Activated CD8-positive, alpha-beta T cell treated with anti-CD3 and anti-CD28 coated beads for 36 hours (primary cell): ENCODE measurements at regions of chr5 and their contacts with region 1.

Region 1: GRCh38 chr5:117454716-117455596 is 880.3 kb upstream of the SEMA6A start:
- DNase-seq: peak; percentile 60
- ATAC-seq: peak; percentile 85
- H3K4me3 Mint-ChIP-seq: peak overlapping the region; percentile 55
- H3K27ac Mint-ChIP-seq: no peak overlapping the region
- H3K4me1 Mint-ChIP-seq: no peaks in the 10 kb centered on the region
- H3K27me3 Mint-ChIP-seq: no peaks in the 10 kb centered on the region
- CTCF ChIP-seq: peak; percentile 85

Region 2: DNA sequence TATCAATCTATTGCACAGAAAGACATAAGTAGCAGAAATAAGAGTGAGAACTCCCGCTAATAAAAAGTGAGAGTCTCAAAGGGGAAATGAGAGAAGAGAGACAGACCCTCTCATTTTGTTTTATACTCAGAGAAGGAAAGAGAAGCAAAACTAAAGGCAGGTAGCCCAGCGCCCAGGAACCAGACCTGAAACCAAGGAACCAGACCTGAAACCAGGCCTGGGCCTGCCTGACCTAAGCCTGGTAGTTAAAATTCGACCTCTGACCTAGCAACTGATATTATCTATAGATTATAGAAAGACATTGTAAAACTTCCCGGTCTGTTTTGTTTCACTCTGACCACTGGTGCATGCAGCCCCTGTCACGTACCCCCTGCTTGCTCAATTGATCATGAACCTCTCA is 745.9 kb before region 1 on chr5:
- CTCF ChIA-PET with region 1: no interaction called
- POLR2A ChIA-PET with region 1: no interaction called
- intact Hi-C with region 1: no loop called
- DNase-seq: no peak
- ATAC-seq: no peak
- H3K4me3 Mint-ChIP-seq: no peak overlapping the region
- H3K27ac Mint-ChIP-seq: no peak overlapping the region
- H3K4me1 Mint-ChIP-seq: no peaks in the 10 kb centered on the region
- H3K27me3 Mint-ChIP-seq: no peaks in the 10 kb centered on the region
- CTCF ChIP-seq: no peak

Region 3: DNA sequence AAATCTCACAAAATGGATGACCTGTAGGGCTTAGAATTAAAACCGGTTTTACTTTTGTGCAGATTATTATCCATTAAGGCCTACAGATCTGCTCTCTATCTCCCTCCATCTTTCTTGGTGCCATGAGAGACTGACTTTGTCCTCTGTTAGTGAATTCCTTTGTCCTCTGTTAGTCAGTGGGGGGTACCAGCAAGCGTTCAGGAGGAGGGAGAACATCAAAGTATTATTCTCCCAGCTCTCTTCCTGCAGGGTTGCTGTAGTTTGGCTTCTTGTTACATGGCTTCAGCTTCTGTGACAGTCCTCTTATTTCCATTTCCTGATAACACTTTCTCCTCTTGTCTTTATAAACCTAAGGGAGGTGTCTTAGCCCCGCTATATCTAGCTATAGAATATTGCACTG is 29.8 kb before region 1 on chr5:
- CTCF ChIA-PET with region 1: interaction called, 11 read pairs
- POLR2A ChIA-PET with region 1: no interaction called
- intact Hi-C with region 1: no loop called
- DNase-seq: no peak
- ATAC-seq: no peak
- H3K4me3 Mint-ChIP-seq: no peak overlapping the region
- H3K27ac Mint-ChIP-seq: no peak overlapping the region
- H3K4me1 Mint-ChIP-seq: no peaks in the 10 kb centered on the region
- H3K27me3 Mint-ChIP-seq: no peaks in the 10 kb centered on the region
- CTCF ChIP-seq: no peak

Region 4: DNA sequence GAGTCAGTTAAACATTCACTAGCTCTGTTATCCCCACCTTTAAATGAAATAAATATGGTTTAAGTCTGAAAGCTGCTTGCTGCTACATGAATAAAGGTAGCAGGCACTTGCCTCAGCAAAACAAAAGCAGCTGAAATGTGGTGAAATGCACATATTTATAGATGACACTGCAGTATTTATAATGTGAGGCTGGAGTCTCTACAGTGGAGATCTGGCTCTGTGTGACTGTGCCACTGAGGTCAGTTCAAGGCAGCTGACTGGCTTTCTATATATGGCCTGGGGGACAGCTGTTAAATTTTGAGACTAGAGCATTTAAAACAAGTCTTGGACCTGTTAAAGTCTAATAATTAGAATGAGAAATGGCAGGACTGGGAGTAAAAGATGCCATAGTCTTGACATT is 20.7 kb before region 1 on chr5:
- CTCF ChIA-PET with region 1: interaction called, 16 read pairs
- POLR2A ChIA-PET with region 1: no interaction called
- intact Hi-C with region 1: no loop called
- DNase-seq: no peak
- ATAC-seq: no peak
- H3K4me3 Mint-ChIP-seq: no peak overlapping the region
- H3K27ac Mint-ChIP-seq: no peak overlapping the region
- H3K4me1 Mint-ChIP-seq: no peaks in the 10 kb centered on the region
- H3K27me3 Mint-ChIP-seq: no peaks in the 10 kb centered on the region
- CTCF ChIP-seq: no peak

Region 5: DNA sequence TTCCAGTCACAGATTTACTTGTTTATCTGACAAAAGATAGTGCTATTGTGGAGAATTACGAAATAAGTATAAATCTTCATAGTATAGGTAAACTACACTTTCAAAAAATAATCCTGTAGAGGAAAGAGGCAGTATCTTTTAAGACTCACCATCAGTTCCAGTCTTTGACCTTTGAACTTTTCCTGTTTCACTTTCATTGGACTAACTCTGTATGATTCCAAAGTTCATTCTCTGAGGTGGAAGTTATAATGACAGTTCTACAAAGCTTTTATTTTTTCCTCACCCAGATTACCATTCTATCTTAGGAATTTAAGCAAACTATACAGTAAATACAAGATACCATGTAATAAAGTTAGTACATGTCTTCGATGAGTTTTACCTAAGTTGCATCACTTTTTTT is 21.0 kb after region 1 on chr5:
- CTCF ChIA-PET with region 1: interaction called, 17 read pairs
- POLR2A ChIA-PET with region 1: no interaction called
- intact Hi-C with region 1: no loop called
- DNase-seq: no peak
- ATAC-seq: no peak
- H3K4me3 Mint-ChIP-seq: no peak overlapping the region
- H3K27ac Mint-ChIP-seq: no peak overlapping the region
- H3K4me1 Mint-ChIP-seq: no peaks in the 10 kb centered on the region
- H3K27me3 Mint-ChIP-seq: no peaks in the 10 kb centered on the region
- CTCF ChIP-seq: no peak

Region 6: GRCh38 chr5:117604845-117605244 is 149.9 kb after region 1 on chr5:
- CTCF ChIA-PET with region 1: no interaction called
- POLR2A ChIA-PET with region 1: no interaction called
- intact Hi-C with region 1: no loop called
- DNase-seq: no peak
- ATAC-seq: no peak
- H3K4me3 Mint-ChIP-seq: no peak overlapping the region
- H3K27ac Mint-ChIP-seq: no peak overlapping the region
- H3K4me1 Mint-ChIP-seq: no peaks in the 10 kb centered on the region
- H3K27me3 Mint-ChIP-seq: no peaks in the 10 kb centered on the region
- CTCF ChIP-seq: no peak

Region 7: DNA sequence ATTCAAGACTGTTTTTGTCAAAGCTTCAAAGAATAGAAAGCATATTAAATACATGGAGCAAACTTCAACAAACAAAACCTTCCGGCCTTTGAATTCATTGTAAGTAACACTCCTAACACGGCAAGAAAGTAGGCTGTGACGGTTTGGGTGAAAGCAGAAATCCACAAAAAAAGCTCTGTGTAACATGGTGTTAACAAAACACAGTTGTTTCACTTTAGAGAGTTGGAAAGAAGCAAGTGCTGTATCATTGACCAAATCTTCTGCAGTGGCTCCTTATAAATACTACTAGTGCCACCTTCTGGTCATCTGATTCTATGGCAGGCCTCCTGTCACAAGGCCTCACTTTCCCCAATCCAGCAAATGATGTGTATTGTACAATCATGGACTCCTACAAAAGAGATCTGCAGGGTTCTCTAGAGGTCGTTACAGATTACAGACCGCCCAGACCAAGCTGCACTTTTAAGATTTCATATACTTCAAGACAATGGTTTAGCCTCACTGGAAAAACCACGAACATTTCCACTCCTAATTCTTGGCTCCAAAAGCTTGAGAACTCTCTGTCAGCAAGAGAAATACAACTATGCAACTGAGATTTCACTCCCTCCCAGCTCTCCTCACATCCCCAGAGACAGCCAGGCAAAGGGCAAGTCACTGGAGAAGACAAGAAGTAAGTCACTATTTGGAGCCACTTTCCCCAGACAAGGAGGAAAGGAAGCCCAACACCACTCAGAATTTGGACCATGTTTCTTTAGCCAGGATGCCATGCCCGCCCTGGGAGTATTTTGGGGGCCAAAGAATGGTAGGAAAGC is 1337.2 kb after region 1 on chr5:
- CTCF ChIA-PET with region 1: interaction called, 18 read pairs
- POLR2A ChIA-PET with region 1: no interaction called
- intact Hi-C with region 1: loop called (anchors 10 kb)
- DNase-seq: peak; percentile 34
- ATAC-seq: peak; percentile 80
- H3K4me3 Mint-ChIP-seq: no peak overlapping the region
- H3K27ac Mint-ChIP-seq: no peak overlapping the region
- H3K4me1 Mint-ChIP-seq: no peaks in the 10 kb centered on the region
- H3K27me3 Mint-ChIP-seq: peaks cover 2% of the 10 kb centered on the region
- CTCF ChIP-seq: peak; percentile 60